A549 (cell line): ENCODE measurements at regions of chr16 and their contacts with region 1.

Region 1: DNA sequence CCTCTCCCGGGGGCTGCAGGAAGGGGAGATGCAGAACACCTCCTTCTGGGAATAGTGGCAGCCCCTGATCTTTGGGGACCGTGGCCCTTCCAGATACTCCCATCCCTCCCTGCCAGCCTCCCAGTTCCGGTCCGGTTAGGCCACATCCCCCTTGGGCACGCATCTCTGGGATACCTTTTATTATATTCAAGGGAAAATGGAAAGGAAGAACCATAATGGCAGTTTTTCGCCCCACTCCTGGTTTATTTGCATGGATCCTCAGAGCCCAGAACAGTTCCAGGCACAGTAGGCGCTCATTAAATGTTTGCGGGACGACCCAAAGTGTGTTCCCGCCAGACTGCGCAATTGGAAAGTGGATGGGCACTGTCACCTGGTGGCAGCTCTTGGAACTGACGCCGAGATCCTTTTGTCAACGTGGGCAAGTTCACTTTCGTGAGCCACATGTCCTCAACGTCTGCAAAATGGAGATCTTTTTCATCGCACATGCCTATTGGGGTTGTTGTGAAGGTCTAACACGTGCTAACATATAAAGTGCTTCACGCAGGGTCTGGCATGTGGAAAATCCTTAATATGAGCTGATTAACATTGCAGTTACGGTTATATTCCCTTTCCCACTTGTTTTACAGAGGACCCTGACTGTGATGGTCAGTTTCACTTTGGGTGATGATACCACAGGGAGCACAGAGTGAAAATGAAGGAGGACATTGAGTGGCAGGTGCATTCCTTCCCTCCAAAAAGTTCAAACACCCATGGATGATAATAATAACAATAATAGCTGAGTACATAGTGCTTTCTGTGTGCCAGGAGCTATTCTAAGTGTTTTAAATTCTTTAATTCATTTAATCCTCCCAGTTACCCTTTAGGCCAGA is 1.7 kb upstream of the GPRC5B start:
- DNase-seq: peak; percentile 43 to 88
- ATAC-seq: peak; percentile 65 to 80
- H3K4me3 ChIP-seq: no peak overlapping the region
- H3K27ac ChIP-seq: peak overlapping the region; percentile 2 to 90; a peak in 4 of 6 replicates
- H3K4me1 ChIP-seq: peaks cover 11% of the 10 kb centered on the region; the same call in 2 of the 3 replicates
- CTCF ChIP-seq: peak; percentile 98
- EP300 ChIP-seq: no peak
- POLR2A ChIP-seq: no peak
- RAD21 ChIP-seq: peak; percentile 100

Region 2: DNA sequence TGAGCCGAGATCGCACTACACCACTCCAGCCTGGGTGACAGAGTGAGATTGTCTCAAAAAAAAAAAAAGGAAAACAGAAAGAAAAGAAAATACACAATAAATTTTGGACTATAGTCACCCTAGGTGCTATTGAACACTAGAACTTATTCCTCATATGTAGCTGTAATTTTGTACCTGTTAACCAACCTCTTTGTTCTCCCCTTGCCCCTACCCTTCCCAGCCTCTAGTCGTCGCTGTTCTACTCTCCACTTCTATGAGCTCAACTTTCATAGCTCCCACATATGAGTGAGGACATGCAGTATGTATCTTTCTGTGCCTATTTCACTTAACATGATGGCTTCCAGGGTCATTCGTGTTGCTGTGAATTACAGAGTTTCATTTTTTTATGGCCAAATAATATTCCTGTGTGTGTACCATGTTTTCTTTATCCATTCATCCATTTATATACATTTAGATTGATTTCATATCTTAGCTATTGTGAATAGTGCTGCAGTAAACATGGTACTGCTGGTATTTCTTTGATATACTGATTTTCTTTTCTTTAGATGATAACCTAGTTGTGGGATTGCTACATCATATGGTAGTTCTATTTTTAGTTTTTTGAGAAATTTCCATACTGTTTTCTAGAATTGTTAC is 302.5 kb before region 1 on chr16:
- CTCF ChIA-PET with region 1: interaction called, 328 read pairs
- POLR2A ChIA-PET with region 1: interaction called, 6 read pairs
- DNase-seq: peak; percentile 30 to 68
- ATAC-seq: peak; percentile 95 to 97; a peak in 5 of 6 replicates
- H3K4me3 ChIP-seq: no peak overlapping the region
- H3K27ac ChIP-seq: no peak overlapping the region
- H3K4me1 ChIP-seq: no peaks in the 10 kb centered on the region
- CTCF ChIP-seq: peak; percentile 92
- EP300 ChIP-seq: no peak
- POLR2A ChIP-seq: no peak
- RAD21 ChIP-seq: peak; percentile 56 to 70

Region 3: GRCh38 chr16:19601083-19601976 is 285.0 kb before region 1 on chr16:
- CTCF ChIA-PET with region 1: interaction called, 328 read pairs
- POLR2A ChIA-PET with region 1: interaction called, 3 read pairs
- DNase-seq: peak; percentile 41 to 42
- ATAC-seq: peak; percentile 56 to 58; a peak in 4 of 6 replicates
- H3K4me3 ChIP-seq: no peak overlapping the region
- H3K27ac ChIP-seq: peak overlapping the region in 1 of 2 experiments; percentile 43; a peak in 3 of 6 replicates
- H3K4me1 ChIP-seq: peaks cover 14% of the 10 kb centered on the region
- CTCF ChIP-seq: peak; percentile 88
- EP300 ChIP-seq: no peak
- POLR2A ChIP-seq: no peak
- RAD21 ChIP-seq: peak; percentile 89 to 92

Region 4: GRCh38 chr16:19636436-19637270 is 249.7 kb before region 1 on chr16:
- CTCF ChIA-PET with region 1: interaction called, 12 read pairs
- POLR2A ChIA-PET with region 1: no interaction called
- DNase-seq: no peak
- ATAC-seq: no peak
- H3K4me3 ChIP-seq: no peak overlapping the region
- H3K27ac ChIP-seq: no peak overlapping the region
- H3K4me1 ChIP-seq: no peaks in the 10 kb centered on the region
- CTCF ChIP-seq: no peak
- EP300 ChIP-seq: no peak
- POLR2A ChIP-seq: no peak
- RAD21 ChIP-seq: no peak

Region 5: GRCh38 chr16:19700319-19700781 is 186.0 kb before region 1 on chr16:
- CTCF ChIA-PET with region 1: interaction called, 22 read pairs
- POLR2A ChIA-PET with region 1: interaction called, 4 read pairs
- DNase-seq: peak; percentile 76 to 81
- ATAC-seq: peak; percentile 68 to 82
- H3K4me3 ChIP-seq: 0 out of 3 replicates have a peak overlapping the region, but pooled peaks have one; percentile 1
- H3K27ac ChIP-seq: peak overlapping the region; percentile 65 to 71
- H3K4me1 ChIP-seq: peaks cover 66% of the 10 kb centered on the region
- CTCF ChIP-seq: no peak
- EP300 ChIP-seq: no peak
- POLR2A ChIP-seq: no peak
- RAD21 ChIP-seq: 0 out of 5 replicates have a peak, but pooled peaks of 1 of the 2 experiments have one; percentile 4

Region 6: DNA sequence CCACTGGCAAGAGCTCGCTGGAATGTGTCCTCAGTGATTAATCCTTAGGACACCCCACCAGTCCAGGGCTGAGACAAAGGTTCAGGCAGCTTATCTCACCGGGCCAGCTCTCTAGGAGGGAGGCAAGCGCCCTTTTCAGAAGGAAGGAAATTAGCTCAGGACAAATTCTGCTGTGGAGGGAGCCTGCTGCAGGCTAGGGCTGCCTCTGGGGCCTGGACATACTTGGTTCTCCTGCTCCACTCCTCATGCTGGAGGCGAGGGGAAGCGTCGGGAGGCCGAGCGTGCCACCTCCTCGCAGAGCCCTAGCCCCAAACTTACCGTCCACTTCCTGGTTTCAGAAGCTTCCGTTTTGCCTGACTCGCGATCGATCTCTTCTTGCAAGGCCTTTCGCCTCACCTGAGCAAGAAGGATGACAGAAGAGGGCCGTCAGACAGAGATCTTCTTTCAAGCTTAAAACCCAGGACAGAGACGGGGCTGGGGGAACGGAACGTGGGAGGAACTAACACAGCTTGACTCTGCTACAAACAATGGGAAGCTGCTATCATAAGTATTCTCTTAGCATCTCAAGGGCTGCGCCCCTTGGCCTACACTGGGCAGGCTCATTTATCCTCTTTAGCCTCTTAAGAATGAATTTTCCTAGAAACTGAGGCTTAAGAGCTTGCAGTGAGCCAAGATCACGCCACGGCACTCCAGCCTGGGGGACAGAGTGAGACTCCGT is 176.0 kb before region 1 on chr16:
- CTCF ChIA-PET with region 1: interaction called, 13 read pairs
- POLR2A ChIA-PET with region 1: interaction called, 5 read pairs
- DNase-seq: no peak
- ATAC-seq: no peak
- H3K4me3 ChIP-seq: no peak overlapping the region
- H3K27ac ChIP-seq: no peak overlapping the region
- H3K4me1 ChIP-seq: peaks cover 6% of the 10 kb centered on the region; the same call in 1 of the 3 replicates
- CTCF ChIP-seq: no peak
- EP300 ChIP-seq: no peak
- POLR2A ChIP-seq: no peak
- RAD21 ChIP-seq: no peak

Region 7: GRCh38 chr16:19874851-19875546 is 11.3 kb before region 1 on chr16:
- CTCF ChIA-PET with region 1: interaction called, 24 read pairs
- POLR2A ChIA-PET with region 1: no interaction called
- DNase-seq: no peak
- ATAC-seq: no peak
- H3K4me3 ChIP-seq: no peak overlapping the region
- H3K27ac ChIP-seq: no peak overlapping the region
- H3K4me1 ChIP-seq: no peaks in the 10 kb centered on the region
- CTCF ChIP-seq: no peak
- EP300 ChIP-seq: no peak
- POLR2A ChIP-seq: no peak
- RAD21 ChIP-seq: no peak

Region 8: GRCh38 chr16:19939553-19939952 is 53.2 kb after region 1 on chr16:
- CTCF ChIA-PET with region 1: no interaction called
- POLR2A ChIA-PET with region 1: no interaction called
- DNase-seq: no peak
- ATAC-seq: no peak
- H3K4me3 ChIP-seq: no peak overlapping the region
- H3K27ac ChIP-seq: no peak overlapping the region
- H3K4me1 ChIP-seq: no peaks in the 10 kb centered on the region
- CTCF ChIP-seq: no peak
- EP300 ChIP-seq: no peak
- POLR2A ChIP-seq: no peak
- RAD21 ChIP-seq: no peak